CD8-positive, alpha-beta memory T cell (primary cell): ENCODE measurements at regions of chr17 and their contacts with region 1.

Region 1: DNA sequence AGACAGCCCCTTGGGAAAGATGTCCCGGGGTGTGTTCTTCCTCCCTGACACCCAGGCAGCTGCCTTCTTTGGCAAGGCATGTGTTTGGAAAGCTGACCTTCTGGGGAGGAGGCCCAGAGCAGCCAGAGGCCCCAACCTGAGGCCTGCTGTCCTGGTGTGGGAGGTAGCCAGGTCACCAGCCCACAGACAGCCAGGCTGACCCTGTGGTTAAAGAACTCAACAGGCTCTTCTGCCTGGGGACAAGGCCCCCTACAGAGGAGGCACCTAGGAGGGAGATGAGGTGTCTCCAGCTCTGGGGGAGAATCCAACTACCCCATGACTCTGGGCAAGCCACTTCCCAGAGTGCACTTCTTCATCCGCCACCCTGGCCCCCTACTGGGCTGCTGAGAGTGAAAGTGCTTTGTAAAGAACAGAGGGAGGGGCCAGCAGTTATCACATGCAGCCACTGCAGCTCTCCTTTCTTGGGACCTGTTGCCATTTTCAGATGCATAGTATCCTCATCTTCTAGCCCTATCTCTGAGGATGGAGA is 13.1 kb upstream of the SREBF1 start:
- DNase-seq: peak; percentile 60 to 83 (median 72)
- H3K4me3 ChIP-seq: peak overlapping the region; percentile 34
- H3K4me3 Mint-ChIP-seq: peak overlapping the region; percentile 15 to 85 (median 73)
- H3K27ac ChIP-seq: peak overlapping the region; percentile 68
- H3K27ac Mint-ChIP-seq: peak overlapping the region; percentile 91 to 99 (median 98)
- H3K4me1 ChIP-seq: peaks cover 54% of the 10 kb centered on the region
- H3K4me1 Mint-ChIP-seq: peaks cover 45 to 72% (median 54%) of the 10 kb centered on the region in 3 donors
- H3K27me3 ChIP-seq: no peaks in the 10 kb centered on the region
- H3K27me3 Mint-ChIP-seq: no peaks in the 10 kb centered on the region

Region 2: GRCh38 chr17:17836250-17836817 is 13.6 kb before region 1 on chr17:
- CTCF ChIA-PET with region 1: interaction called, 21 read pairs
- POLR2A ChIA-PET with region 1: interaction called, 23 read pairs
- DNase-seq: peak; percentile 96 to 98 (median 98)
- H3K4me3 ChIP-seq: peak overlapping the region; percentile 47
- H3K4me3 Mint-ChIP-seq: peak overlapping the region; percentile 82 to 94 (median 88)
- H3K27ac ChIP-seq: peak overlapping the region; percentile 97
- H3K27ac Mint-ChIP-seq: peak overlapping the region; percentile 90 to 99 (median 98)
- H3K4me1 ChIP-seq: peaks cover 65% of the 10 kb centered on the region
- H3K4me1 Mint-ChIP-seq: peaks cover 55 to 72% (median 58%) of the 10 kb centered on the region in 3 donors
- H3K27me3 ChIP-seq: no peaks in the 10 kb centered on the region
- H3K27me3 Mint-ChIP-seq: peaks cover 0 to 7% of the 10 kb centered on the region in 2 donors

Region 3: DNA sequence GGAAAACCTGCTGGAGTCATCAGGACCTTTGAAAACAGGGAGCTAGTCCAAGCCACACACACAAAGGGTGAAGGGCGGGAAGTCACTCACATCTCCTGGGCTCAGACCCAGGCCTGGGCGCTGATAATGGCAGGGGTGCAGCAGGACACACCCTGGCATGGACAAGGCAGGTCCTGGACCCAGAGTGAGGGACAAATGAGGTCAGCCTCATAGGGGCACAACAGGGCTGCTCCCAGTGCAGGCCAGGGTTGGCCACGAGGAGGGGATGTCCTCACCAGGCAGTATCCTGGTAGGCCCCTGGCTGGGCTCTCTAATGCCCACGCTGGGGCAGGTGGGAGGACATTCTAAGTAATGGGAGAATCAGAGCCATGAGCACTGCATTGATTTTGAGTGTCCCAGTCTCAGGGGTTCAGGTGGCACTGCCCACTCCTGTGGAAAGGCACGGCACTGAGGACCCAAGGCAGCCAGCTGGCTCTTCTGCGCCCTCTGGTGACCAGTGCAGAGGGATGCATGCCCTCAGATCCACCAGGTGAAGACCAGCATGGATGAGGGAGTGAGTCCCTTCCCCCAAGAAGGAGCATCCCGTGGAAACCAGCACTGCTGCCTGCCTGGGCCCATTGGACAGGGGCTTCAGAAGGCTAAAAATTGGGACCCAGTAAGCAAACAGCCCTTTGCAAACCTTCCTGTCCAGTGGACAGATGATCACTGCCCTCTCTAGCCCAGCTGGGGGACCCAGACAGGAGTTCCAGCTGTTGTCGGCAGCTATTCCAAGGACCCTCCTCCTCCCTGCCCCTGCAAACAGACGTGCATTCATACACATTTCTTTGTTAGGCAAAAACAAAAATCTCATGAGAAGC is 10.2 kb after region 1 on chr17:
- CTCF ChIA-PET with region 1: interaction called, 10 read pairs
- POLR2A ChIA-PET with region 1: no interaction called
- DNase-seq: peak; percentile 60 to 79 (median 62)
- H3K4me3 ChIP-seq: no peak overlapping the region
- H3K4me3 Mint-ChIP-seq: no peak overlapping the region
- H3K27ac ChIP-seq: no peak overlapping the region
- H3K27ac Mint-ChIP-seq: no peak overlapping the region
- H3K4me1 ChIP-seq: peaks cover 37% of the 10 kb centered on the region
- H3K4me1 Mint-ChIP-seq: peaks cover 11 to 31% (median 29%) of the 10 kb centered on the region in 3 donors
- H3K27me3 ChIP-seq: no peaks in the 10 kb centered on the region
- H3K27me3 Mint-ChIP-seq: no peaks in the 10 kb centered on the region